CD4-positive, alpha-beta T cell (primary cell): ENCODE measurements at regions of chr20 and their contacts with region 1.

Region 1: GRCh38 chr20:41428285-41428684 is 61.7 kb upstream of the EMILIN3 start:
- DNase-seq: peak in 12 of 14 experiments; percentile 5 to 59 (median 38)
- ATAC-seq: peak; percentile 96
- H3K4me3 ChIP-seq: no peak overlapping the region
- H3K4me3 Mint-ChIP-seq: peak overlapping the region; percentile 16
- H3K27ac ChIP-seq: no peak overlapping the region
- H3K27ac Mint-ChIP-seq: peak overlapping the region; percentile 82
- H3K4me1 ChIP-seq: peaks cover 3% of the 10 kb centered on the region
- H3K4me1 Mint-ChIP-seq: peaks cover 61% of the 10 kb centered on the region
- H3K27me3 ChIP-seq: no peaks in the 10 kb centered on the region
- H3K27me3 Mint-ChIP-seq: no peaks in the 10 kb centered on the region
- CTCF ChIP-seq: no peak

Region 2: DNA sequence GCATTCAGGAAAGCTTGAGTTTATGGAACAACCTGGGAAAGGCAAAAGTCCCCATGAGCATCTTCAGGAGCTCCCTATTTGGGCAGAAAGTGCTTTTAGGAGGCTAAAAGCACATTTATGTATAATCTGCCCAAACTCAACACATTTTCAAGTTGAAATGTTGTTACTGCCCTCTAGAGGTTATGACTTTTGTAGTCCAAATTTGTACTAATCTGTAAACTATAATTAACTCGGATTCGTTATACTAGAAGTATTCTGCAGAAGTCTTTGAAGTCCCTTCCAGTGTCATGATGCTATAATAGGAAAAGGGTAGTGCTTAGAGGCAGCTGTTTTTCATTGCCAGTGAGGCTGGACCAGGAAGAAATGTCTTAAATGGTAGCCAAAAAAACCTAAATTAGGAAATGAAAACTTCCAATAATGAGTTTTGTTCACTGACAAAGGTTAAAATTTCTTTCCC is 16.9 kb before region 1 on chr20:
- CTCF ChIA-PET with region 1: no interaction called
- POLR2A ChIA-PET with region 1: interaction called, 12 read pairs
- intact Hi-C with region 1: no loop called
- DNase-seq: no peak
- ATAC-seq: peak; percentile 41
- H3K4me3 ChIP-seq: no peak overlapping the region
- H3K4me3 Mint-ChIP-seq: no peak overlapping the region
- H3K27ac ChIP-seq: no peak overlapping the region
- H3K27ac Mint-ChIP-seq: peak overlapping the region; percentile 26
- H3K4me1 ChIP-seq: peaks cover 14% of the 10 kb centered on the region
- H3K4me1 Mint-ChIP-seq: peaks cover 51% of the 10 kb centered on the region
- H3K27me3 ChIP-seq: no peaks in the 10 kb centered on the region
- H3K27me3 Mint-ChIP-seq: no peaks in the 10 kb centered on the region
- CTCF ChIP-seq: peak; percentile 50

Region 3: DNA sequence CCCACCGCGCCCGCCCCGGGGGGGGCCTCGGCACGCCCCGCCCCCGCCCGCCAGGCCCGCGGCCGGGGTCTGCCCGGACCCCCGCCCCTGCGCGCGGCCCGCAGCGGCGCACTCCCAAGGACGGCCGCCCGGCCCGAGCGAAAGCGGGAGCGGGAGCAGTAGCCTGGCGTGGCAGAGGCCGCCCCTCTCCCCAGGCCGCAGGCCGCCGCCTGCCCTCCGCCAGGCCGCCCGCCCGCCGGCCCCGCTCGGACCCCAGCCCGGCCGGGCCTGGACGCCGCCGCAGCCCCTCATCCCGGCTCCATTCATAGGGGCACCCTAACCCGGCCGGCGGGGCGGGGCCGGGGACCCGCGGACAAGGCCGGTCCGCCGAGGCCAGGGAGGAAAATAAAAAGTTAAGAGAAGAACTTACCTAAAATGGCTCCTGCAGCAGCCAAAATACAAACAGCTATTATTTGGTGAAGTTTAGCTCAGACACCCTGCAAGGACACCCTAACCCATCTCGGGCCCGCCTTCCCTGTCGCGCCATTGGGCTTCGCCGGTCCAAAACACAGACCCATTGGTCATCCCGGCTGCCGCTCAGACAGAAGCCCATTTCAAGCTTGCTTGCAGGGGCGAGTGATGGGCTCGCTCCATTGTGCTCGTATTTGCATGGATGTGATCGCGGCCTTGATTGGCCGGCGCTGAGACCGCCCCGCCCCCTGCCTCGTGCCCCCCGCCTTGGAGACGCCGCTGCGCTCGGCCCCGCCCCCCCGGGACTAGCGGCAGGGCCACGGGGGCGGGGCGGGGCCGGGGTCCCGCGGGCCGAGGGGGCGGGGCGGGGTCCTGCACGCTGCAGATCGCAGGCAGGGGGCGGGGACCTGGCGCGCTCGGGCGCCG is 189.9 kb after region 1 on chr20 and contains the start of gene CHD6:
- CTCF ChIA-PET with region 1: no interaction called
- POLR2A ChIA-PET with region 1: interaction called, 24 read pairs
- intact Hi-C with region 1: loop called in 1 of 2 experiments (anchors 5 kb)
- DNase-seq: peak; percentile 98 to 100 (median 99)
- ATAC-seq: peak; percentile 96
- H3K4me3 ChIP-seq: peak within 1 kb of the TSS; percentile 75
- H3K4me3 Mint-ChIP-seq: peak within 1 kb of the TSS; percentile 99
- H3K27ac ChIP-seq: peak within 1 kb of the TSS; percentile 10 to 53
- H3K27ac Mint-ChIP-seq: peak within 1 kb of the TSS; percentile 93
- H3K4me1 ChIP-seq: peaks cover 19% of the 10 kb centered on the region
- H3K4me1 Mint-ChIP-seq: peaks cover 55% of the 10 kb centered on the region
- H3K27me3 ChIP-seq: no peaks in the 10 kb centered on the region
- H3K27me3 Mint-ChIP-seq: no peaks in the 10 kb centered on the region
- CTCF ChIP-seq: no peak
- total RNA-seq, gene CHD6: 114 to 126 TPM

Region 4: DNA sequence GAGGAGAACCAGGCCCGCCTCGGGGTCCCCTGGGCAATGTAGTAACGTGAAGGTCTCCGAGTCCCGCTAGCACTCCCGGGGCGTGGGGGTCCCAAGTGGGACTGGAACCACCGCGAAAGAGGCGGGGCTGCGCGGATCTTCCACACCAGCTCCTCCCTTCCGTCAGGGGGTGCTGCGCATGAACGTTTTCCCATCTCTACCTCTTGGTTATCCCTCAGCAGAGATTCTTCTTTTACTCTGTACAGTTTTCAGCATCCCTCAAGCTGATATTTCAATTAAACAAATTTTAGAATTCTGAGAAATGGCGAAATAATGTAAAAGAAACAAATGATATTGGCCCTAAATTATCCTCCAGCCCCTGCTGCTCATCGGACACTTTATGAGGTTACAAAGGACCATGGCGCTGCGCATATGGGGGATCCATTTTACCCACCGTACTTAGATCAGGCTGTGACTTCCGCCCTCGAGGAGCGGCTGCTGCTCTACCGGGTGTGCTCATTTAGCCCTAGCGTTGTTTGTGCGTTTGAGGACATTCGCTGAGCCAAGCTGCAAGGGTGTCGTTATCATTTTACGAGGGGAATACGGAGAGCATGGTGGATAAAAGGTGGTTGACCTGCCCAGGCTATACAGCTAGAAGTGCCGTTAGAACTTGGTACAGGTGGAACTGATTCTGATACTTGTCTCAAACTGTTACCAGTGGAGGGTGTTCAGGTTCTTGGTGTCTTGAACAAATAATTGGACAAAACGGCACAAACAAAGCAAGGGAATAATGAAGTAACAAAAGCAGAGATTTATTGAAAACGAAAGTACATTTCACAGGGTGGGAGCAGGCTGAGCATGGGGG is 265.1 kb after region 1 on chr20:
- CTCF ChIA-PET with region 1: no interaction called
- POLR2A ChIA-PET with region 1: interaction called, 11 read pairs
- intact Hi-C with region 1: loop called in 1 of 2 experiments (anchors 5 kb)
- DNase-seq: peak; percentile 67 to 93 (median 76)
- ATAC-seq: peak; percentile 86
- H3K4me3 ChIP-seq: peak overlapping the region; percentile 83
- H3K4me3 Mint-ChIP-seq: peak overlapping the region; percentile 90
- H3K27ac ChIP-seq: peak overlapping the region; percentile 76 to 87
- H3K27ac Mint-ChIP-seq: peak overlapping the region; percentile 87
- H3K4me1 ChIP-seq: peaks cover 14% of the 10 kb centered on the region
- H3K4me1 Mint-ChIP-seq: peaks cover 27% of the 10 kb centered on the region
- H3K27me3 ChIP-seq: peaks cover 0 to 3% of the 10 kb centered on the region in 2 experiments
- H3K27me3 Mint-ChIP-seq: peaks cover 5% of the 10 kb centered on the region
- CTCF ChIP-seq: peak; percentile 53

Region 5: GRCh38 chr20:41923624-41924023 is 495.3 kb after region 1 on chr20:
- CTCF ChIA-PET with region 1: no interaction called
- POLR2A ChIA-PET with region 1: no interaction called
- intact Hi-C with region 1: no loop called
- DNase-seq: no peak
- ATAC-seq: no peak
- H3K4me3 ChIP-seq: no peak overlapping the region
- H3K4me3 Mint-ChIP-seq: no peak overlapping the region
- H3K27ac ChIP-seq: no peak overlapping the region
- H3K27ac Mint-ChIP-seq: no peak overlapping the region
- H3K4me1 ChIP-seq: no peaks in the 10 kb centered on the region
- H3K4me1 Mint-ChIP-seq: no peaks in the 10 kb centered on the region
- H3K27me3 ChIP-seq: peaks cover 0 to 3% of the 10 kb centered on the region in 2 experiments
- H3K27me3 Mint-ChIP-seq: peaks cover 37% of the 10 kb centered on the region
- CTCF ChIP-seq: no peak